Activated CD4-positive, alpha-beta T cell treated with anti-CD3 and anti-CD28 coated beads for 36 hours (primary cell): ENCODE measurements at regions of chr6 and their contacts with region 1.

Region 1: DNA sequence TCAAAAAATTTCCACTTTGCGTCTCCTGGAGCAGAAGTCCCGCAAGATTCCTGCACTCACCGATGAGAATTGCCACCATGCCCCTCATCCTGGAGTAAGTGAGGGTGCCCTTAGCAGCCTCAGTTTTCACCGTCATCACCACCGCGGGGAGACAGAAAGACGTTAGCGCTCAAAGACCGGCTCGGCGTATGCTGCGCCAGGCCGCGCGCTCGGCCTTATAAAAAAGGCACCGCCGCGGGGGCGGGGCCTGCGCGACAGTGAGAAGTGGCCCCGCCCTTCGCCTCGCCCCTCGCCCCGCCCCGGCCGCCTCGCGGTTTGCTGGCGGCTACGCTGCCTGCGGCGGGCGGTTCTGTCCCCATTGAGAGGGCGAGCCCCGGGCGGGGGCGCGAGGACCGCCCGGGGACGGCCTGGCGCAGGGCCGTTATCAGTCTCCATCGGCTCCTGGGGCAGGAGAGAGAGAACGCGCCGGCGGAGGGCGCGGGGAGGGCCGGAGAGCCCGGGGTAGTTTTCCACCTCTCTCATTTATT is 122.3 kb upstream of the SLC2A12 start:
- DNase-seq: peak; percentile 96
- ATAC-seq: peak; percentile 78
- H3K4me3 Mint-ChIP-seq: peak overlapping the region; percentile 96
- H3K27ac Mint-ChIP-seq: peak overlapping the region; percentile 94
- H3K4me1 Mint-ChIP-seq: peaks cover 64% of the 10 kb centered on the region
- H3K27me3 Mint-ChIP-seq: no peaks in the 10 kb centered on the region

Region 2: GRCh38 chr6:134080171-134080795 is 94.5 kb before region 1 on chr6:
- CTCF ChIA-PET with region 1: no interaction called
- POLR2A ChIA-PET with region 1: no interaction called
- intact Hi-C with region 1: no loop called
- DNase-seq: no peak
- ATAC-seq: no peak
- H3K4me3 Mint-ChIP-seq: no peak overlapping the region
- H3K27ac Mint-ChIP-seq: no peak overlapping the region
- H3K4me1 Mint-ChIP-seq: peaks cover 10% of the 10 kb centered on the region
- H3K27me3 Mint-ChIP-seq: no peaks in the 10 kb centered on the region

Region 3: GRCh38 chr6:134195164-134195906 is 20.6 kb after region 1 on chr6:
- CTCF ChIA-PET with region 1: interaction called, 14 read pairs
- POLR2A ChIA-PET with region 1: no interaction called
- intact Hi-C with region 1: no loop called
- DNase-seq: no peak
- ATAC-seq: no peak
- H3K4me3 Mint-ChIP-seq: no peak overlapping the region
- H3K27ac Mint-ChIP-seq: no peak overlapping the region
- H3K4me1 Mint-ChIP-seq: peaks cover 7% of the 10 kb centered on the region
- H3K27me3 Mint-ChIP-seq: no peaks in the 10 kb centered on the region

Region 4: GRCh38 chr6:134288538-134289203 is 113.9 kb after region 1 on chr6:
- CTCF ChIA-PET with region 1: interaction called, 6 read pairs
- POLR2A ChIA-PET with region 1: no interaction called
- intact Hi-C with region 1: loop called (anchors 1 kb)
- DNase-seq: peak; percentile 15
- ATAC-seq: peak; percentile 86
- H3K4me3 Mint-ChIP-seq: no peak overlapping the region
- H3K27ac Mint-ChIP-seq: peak overlapping the region; percentile 90
- H3K4me1 Mint-ChIP-seq: peaks cover 20% of the 10 kb centered on the region
- H3K27me3 Mint-ChIP-seq: no peaks in the 10 kb centered on the region

Region 5: GRCh38 chr6:134416418-134417154 is 241.9 kb after region 1 on chr6:
- CTCF ChIA-PET with region 1: no interaction called
- POLR2A ChIA-PET with region 1: no interaction called
- intact Hi-C with region 1: no loop called
- DNase-seq: peak; percentile 9
- ATAC-seq: peak; percentile 73
- H3K4me3 Mint-ChIP-seq: no peak overlapping the region
- H3K27ac Mint-ChIP-seq: no peak overlapping the region
- H3K4me1 Mint-ChIP-seq: peaks cover 15% of the 10 kb centered on the region
- H3K27me3 Mint-ChIP-seq: peaks cover 2% of the 10 kb centered on the region

Region 6: DNA sequence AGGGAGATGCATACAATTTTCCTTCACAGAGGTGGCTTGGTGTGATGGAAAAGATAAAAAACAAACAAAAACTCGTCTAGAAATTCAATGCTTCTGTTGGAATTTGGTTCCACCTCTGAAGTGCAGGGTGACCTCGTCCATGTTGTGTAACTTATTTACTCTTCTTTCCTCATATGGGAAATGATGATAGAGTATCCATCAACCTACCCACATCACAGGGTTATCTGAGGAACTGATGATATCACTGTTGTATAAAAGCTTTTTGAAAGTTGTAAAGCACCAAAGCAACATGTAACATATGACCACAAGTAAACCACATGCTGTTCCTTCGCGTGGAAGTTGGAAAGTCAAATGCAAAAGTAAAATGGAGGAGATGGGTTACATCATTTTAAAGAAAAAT is 355.2 kb after region 1 on chr6:
- CTCF ChIA-PET with region 1: no interaction called
- POLR2A ChIA-PET with region 1: no interaction called
- intact Hi-C with region 1: loop called in 1 of 2 experiments (anchors 5 kb)
- DNase-seq: no peak
- ATAC-seq: no peak
- H3K4me3 Mint-ChIP-seq: no peak overlapping the region
- H3K27ac Mint-ChIP-seq: no peak overlapping the region
- H3K4me1 Mint-ChIP-seq: peaks cover 24% of the 10 kb centered on the region
- H3K27me3 Mint-ChIP-seq: no peaks in the 10 kb centered on the region

Region 7: DNA sequence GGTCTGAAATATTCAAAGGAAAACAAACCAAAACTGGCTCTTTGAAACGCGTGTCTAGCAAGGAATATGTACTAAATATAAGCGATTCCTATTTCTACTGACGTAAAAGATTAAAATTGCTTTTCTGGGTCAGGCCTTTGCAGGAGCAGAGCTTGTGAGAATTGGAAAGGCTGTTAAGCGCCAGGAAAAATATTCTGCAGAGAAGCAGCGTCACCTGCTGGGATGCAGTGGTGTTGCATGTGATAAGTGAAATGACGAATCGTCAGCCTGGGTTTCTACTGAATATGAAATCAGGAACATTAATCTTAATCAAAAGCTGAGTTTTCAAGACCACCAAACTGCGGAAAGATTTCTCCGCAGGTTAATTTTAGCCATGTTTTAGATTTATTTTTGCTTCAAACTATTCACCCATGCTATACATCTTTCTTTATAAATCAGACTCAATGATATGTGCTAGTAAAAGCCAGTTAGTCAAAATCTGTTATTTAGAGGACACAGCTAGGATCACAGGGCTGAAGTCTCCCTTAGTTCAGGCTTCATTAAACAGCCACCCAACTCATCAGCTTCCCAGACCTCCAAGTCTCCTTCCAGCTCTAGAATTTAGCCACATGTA is 707.8 kb after region 1 on chr6:
- CTCF ChIA-PET with region 1: interaction called, 11 read pairs
- POLR2A ChIA-PET with region 1: no interaction called
- intact Hi-C with region 1: loop called (anchors 1 kb)
- DNase-seq: peak; percentile 73
- ATAC-seq: no peak
- H3K4me3 Mint-ChIP-seq: no peak overlapping the region
- H3K27ac Mint-ChIP-seq: no peak overlapping the region
- H3K4me1 Mint-ChIP-seq: no peaks in the 10 kb centered on the region
- H3K27me3 Mint-ChIP-seq: peaks cover 6% of the 10 kb centered on the region

Region 8: DNA sequence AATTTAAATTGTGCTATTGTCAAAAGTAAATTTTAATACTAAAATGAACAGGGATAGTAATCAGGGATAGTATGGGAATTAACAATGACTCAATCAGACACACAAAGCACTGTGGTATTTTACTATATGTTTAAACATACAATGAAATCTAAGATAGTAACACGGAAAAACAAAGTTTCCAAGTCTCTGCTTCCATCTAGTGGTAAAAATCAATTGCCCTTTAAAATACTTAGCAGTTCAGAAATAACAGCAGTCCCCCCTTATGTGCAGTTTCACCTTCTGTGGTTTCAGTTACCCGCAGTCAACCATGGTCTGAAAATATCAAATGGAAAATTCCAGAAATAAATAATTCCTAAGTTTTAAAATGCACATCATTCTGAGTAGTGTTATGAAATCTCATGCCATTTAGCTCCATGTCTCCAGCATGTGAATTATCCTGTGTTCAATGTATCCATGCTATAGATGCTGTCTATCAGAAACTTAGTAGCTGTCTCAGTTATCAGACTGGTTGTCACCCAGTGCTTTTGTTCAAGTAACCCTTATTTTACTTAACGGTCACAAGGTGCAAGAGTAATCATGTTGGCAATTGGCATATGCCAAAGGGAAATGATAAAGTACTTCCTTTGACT is 1264.3 kb after region 1 on chr6:
- CTCF ChIA-PET with region 1: no interaction called
- POLR2A ChIA-PET with region 1: no interaction called
- intact Hi-C with region 1: loop called in 1 of 2 experiments (anchors 1 kb)
- DNase-seq: no peak
- ATAC-seq: peak; percentile 46
- H3K4me3 Mint-ChIP-seq: no peak overlapping the region
- H3K27ac Mint-ChIP-seq: peak overlapping the region; percentile 66
- H3K4me1 Mint-ChIP-seq: peaks cover 20% of the 10 kb centered on the region
- H3K27me3 Mint-ChIP-seq: no peaks in the 10 kb centered on the region